ENCODE measurements at regions of chr7 and their contacts with region 1.

Region 1: DNA sequence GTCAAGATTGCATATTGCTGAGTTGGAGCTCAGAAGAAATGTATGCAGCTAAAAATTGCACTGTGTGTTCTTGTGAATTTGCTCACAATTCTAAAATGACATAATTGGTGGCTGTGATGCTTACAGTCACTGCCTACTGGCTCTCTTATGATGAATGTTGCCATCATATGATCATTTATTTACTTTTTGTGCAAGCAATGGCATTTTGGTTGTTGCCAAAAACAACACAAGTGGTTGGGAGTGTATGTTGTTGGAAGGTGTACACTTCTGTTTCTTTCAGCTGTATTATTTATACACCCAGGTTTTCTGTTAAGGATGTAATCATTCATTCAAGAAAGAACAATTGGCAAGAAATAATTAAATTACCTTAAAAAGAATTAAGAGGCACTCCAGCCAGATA is 28.9 kb downstream of the PON1 start:
- DNase-seq: no peak
- ATAC-seq: no peak
- H3K4me3 ChIP-seq: no peak overlapping the region
- H3K4me3 Mint-ChIP-seq: no peak overlapping the region
- H3K27ac ChIP-seq: no peak overlapping the region
- H3K27ac Mint-ChIP-seq: no peak overlapping the region
- H3K4me1 ChIP-seq: no peaks in the 10 kb centered on the region
- H3K4me1 Mint-ChIP-seq: no peaks in the 10 kb centered on the region
- H3K27me3 ChIP-seq: no peaks in the 10 kb centered on the region
- H3K27me3 Mint-ChIP-seq: peaks cover 18% of the 10 kb centered on the region
- CTCF ChIP-seq: no peak

Region 2: GRCh38 chr7:95172420-95172819 is 123.0 kb before region 1 on chr7:
- CTCF ChIA-PET with region 1: no interaction called
- POLR2A ChIA-PET with region 1: no interaction called
- intact Hi-C with region 1: no loop called
- DNase-seq: no peak
- ATAC-seq: no peak
- H3K4me3 ChIP-seq: no peak overlapping the region
- H3K4me3 Mint-ChIP-seq: no peak overlapping the region
- H3K27ac ChIP-seq: no peak overlapping the region
- H3K27ac Mint-ChIP-seq: no peak overlapping the region
- H3K4me1 ChIP-seq: no peaks in the 10 kb centered on the region
- H3K4me1 Mint-ChIP-seq: no peaks in the 10 kb centered on the region
- H3K27me3 ChIP-seq: no peaks in the 10 kb centered on the region
- H3K27me3 Mint-ChIP-seq: no peaks in the 10 kb centered on the region
- CTCF ChIP-seq: no peak

Region 3: GRCh38 chr7:95357623-95358022 is 62.2 kb after region 1 on chr7:
- CTCF ChIA-PET with region 1: no interaction called
- POLR2A ChIA-PET with region 1: no interaction called
- intact Hi-C with region 1: loop called in 1 of 2 experiments (anchors 10 kb)
- DNase-seq: no peak
- ATAC-seq: no peak
- H3K4me3 ChIP-seq: no peak overlapping the region
- H3K4me3 Mint-ChIP-seq: no peak overlapping the region
- H3K27ac ChIP-seq: no peak overlapping the region
- H3K27ac Mint-ChIP-seq: no peak overlapping the region
- H3K4me1 ChIP-seq: no peaks in the 10 kb centered on the region
- H3K4me1 Mint-ChIP-seq: no peaks in the 10 kb centered on the region
- H3K27me3 ChIP-seq: no peaks in the 10 kb centered on the region
- H3K27me3 Mint-ChIP-seq: no peaks in the 10 kb centered on the region
- CTCF ChIP-seq: no peak

Region 4: DNA sequence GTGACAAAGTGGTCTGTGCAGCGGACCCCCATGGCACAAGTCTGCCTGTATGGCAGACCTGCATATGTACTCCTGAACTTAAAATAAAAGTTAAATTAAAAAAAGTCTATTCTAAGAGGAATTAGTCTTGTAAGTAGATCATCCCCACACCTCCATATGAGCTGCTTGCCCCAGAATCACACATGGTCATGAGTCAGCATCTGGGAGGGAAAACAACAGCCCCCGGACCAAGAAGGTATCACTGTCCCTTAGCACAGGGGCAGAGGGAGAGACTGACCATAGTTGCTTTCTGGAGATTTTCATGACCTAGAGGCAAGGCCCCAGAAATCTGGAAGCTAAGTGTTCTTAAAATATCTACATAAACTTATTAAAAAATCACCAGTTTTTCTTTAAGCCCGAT is 387.5 kb after region 1 on chr7:
- CTCF ChIA-PET with region 1: no interaction called
- POLR2A ChIA-PET with region 1: no interaction called
- intact Hi-C with region 1: no loop called
- DNase-seq: no peak
- ATAC-seq: no peak
- H3K4me3 ChIP-seq: no peak overlapping the region
- H3K4me3 Mint-ChIP-seq: no peak overlapping the region
- H3K27ac ChIP-seq: no peak overlapping the region
- H3K27ac Mint-ChIP-seq: no peak overlapping the region
- H3K4me1 ChIP-seq: no peaks in the 10 kb centered on the region
- H3K4me1 Mint-ChIP-seq: no peaks in the 10 kb centered on the region
- H3K27me3 ChIP-seq: no peaks in the 10 kb centered on the region
- H3K27me3 Mint-ChIP-seq: no peaks in the 10 kb centered on the region
- CTCF ChIP-seq: no peak

Region 5: DNA sequence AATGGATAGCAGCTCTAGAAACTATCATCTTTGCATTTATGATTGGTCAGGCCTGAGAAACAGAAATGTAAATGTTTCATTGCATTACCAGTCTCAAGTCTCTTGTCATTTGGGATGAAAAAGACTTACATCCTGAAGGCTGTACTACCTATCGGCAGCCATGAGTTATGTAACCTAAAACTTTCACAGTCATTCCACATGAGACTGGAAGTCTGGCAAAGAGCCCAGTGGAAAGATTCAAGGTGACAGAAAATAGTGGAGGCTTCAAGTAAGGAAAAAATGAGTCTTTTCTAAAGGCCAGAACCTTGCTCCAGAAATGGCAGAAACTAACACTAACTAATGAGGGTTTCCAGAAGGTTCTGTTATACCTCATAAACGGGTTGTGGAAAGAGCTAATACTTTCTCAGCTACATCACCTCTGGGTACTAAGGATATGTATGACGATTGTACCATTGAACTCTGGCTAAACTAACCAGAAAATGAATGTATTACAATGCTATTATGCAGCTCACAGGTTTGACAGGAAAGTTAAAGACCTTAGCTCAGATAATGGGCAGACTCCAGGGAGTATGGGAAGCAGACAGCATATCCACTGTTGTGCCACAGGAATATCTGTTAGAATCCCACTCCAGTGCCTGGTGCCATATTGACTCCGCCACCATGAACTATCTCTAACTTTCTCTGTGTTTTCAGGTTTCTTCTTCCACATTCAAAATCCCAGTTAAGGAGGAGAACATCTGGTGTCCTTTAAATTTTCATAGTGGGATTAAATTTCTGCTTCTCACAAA is 435.3 kb after region 1 on chr7:
- CTCF ChIA-PET with region 1: no interaction called
- POLR2A ChIA-PET with region 1: no interaction called
- intact Hi-C with region 1: no loop called
- DNase-seq: no peak
- ATAC-seq: no peak
- H3K4me3 ChIP-seq: no peak overlapping the region
- H3K4me3 Mint-ChIP-seq: no peak overlapping the region
- H3K27ac ChIP-seq: no peak overlapping the region
- H3K27ac Mint-ChIP-seq: no peak overlapping the region
- H3K4me1 ChIP-seq: no peaks in the 10 kb centered on the region
- H3K4me1 Mint-ChIP-seq: no peaks in the 10 kb centered on the region
- H3K27me3 ChIP-seq: no peaks in the 10 kb centered on the region
- H3K27me3 Mint-ChIP-seq: no peaks in the 10 kb centered on the region
- CTCF ChIP-seq: no peak